ENCODE measurements at regions of chr6 and their contacts with region 1.

Region 1: GRCh38 chr6:149660028-149660427 is 11.5 kb upstream of the KATNA1 start:
- H3K4me3 ChIP-seq: no peak overlapping the region
- H3K27ac ChIP-seq: no peak overlapping the region
- H3K4me1 ChIP-seq: no peaks in the 10 kb centered on the region
- CTCF ChIP-seq: no peak

Region 2: GRCh38 chr6:149648148-149649145 is 11.6 kb before region 1 on chr6 and contains the start of gene KATNA1:
- CTCF ChIA-PET with region 1: no interaction called
- POLR2A ChIA-PET with region 1: interaction called, 11 read pairs
- H3K4me3 ChIP-seq: peak within 1 kb of the TSS; percentile 87
- H3K27ac ChIP-seq: peak within 1 kb of the TSS; percentile 73
- H3K4me1 ChIP-seq: peaks cover 7% of the 10 kb centered on the region
- CTCF ChIP-seq: peak; percentile 60; the same call in 1 of the 2 replicates

Region 3: DNA sequence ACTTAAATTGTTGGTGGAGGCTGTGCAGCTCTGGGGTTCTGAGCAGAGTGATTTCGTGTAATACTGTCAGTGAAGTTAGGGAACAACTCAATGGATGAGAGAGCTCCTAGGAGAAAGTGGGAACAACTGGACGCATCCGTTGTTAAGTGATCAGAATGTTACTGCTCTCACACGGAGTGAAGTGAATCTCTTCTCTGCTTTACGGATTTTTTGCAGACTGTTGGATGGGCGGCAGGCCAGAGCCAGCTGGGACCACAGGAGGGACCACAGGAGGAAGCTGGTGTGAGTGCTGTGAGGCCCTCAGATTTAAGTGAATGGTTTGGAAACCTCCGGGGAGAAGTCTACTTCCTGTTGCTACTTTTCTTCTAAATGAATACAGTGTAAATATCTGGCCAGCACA is 459.1 kb after region 1 on chr6:
- CTCF ChIA-PET with region 1: no interaction called
- POLR2A ChIA-PET with region 1: no interaction called
- H3K4me3 ChIP-seq: no peak overlapping the region
- H3K27ac ChIP-seq: no peak overlapping the region
- H3K4me1 ChIP-seq: no peaks in the 10 kb centered on the region
- CTCF ChIP-seq: no peak

Measured in HEK293 (cell line).